GM10248 (cell line): ENCODE measurements at regions of chr10 and their contacts with region 1.

Region 1: GRCh38 chr10:131453594-131454355 is 142.3 kb upstream of the TCERG1L start:
- DNase-seq: peak; percentile 56
- CTCF ChIP-seq: peak; percentile 57

Region 2: DNA sequence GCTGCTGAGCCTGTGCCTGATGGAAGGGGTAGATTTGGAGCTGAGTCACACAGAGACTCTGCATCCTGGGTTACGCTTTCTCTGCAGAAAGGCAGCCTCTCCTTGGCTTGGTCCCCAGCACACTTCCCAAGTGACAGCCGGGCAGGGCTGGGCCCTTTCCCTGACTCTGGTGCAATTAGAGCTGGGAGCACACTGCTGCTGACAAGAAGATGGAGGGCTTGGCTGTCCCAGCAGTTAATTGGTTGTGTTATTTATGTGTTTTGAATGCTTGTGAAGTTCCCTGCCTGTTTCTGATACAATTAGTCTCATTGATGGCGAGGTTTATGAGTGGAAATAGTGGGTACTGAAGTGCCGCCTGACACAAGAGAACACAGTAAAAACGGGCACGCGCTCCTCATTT is 265.8 kb before region 1 on chr10:
- CTCF ChIA-PET with region 1: no interaction called
- POLR2A ChIA-PET with region 1: no interaction called
- DNase-seq: no peak
- CTCF ChIP-seq: no peak

Region 3: DNA sequence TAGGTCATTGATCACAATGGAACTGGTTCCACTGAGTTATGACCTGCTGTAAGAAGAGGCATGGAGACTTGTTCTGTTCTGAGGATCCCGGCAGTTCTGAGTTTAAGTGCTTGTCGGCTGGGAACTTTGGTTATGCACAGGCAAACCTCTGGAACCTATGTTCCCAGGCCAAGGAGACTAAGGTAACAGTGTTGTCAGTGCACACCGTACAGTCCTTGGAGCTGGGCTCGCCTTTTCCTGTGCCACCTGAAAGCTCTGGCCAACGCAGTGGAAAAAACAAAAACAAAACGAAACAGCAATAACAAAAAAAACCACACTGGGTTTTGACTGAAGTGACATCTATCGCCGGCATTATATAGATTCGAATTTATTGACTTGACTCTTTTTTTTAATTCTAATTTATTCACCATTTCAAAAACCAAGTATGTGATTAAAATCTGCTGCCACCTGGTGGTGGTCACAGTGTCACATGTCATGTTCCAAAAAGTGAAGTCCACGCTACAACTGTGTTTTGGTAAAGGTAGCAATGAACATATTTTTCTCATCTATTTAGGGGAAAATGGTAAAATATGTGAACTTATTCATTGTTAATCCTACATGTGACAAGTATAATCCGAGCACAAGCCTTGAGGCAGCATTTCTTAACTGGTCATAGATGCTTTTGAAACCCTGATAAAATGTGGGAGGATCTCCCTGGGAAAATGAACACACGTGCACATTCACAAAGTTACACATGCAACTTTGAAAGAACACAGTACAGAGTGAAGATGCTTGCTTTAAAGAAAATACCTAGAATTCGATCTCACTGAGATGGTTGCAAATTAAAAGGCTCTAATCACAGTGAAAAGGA is 333.2 kb after region 1 on chr10:
- CTCF ChIA-PET with region 1: interaction called, 16 read pairs
- POLR2A ChIA-PET with region 1: no interaction called
- DNase-seq: no peak
- CTCF ChIP-seq: peak; percentile 62

Region 4: DNA sequence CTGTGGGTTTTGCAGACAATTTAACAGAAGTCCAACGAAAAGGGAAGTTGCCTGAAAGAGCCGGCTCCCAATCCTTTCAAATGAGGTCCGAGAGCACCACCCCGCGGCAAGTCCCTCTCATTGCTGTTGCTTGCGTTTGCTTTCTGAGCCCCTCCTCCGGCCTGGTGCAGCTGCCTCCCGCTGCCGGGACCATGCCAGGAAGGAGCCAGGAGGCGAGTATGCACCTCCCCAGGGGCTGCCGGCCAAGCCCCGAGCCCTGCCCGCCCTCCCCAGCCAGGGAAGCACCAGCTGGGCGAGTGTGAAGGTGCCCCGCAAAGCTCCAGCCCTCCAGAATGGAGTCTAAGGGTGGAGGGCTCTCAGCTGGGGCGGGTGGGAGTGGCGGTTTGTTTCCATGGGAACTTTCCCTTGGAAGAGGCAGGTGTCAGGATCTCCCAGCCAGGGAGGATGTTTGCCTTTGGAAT is 421.2 kb after region 1 on chr10:
- CTCF ChIA-PET with region 1: interaction called, 17 read pairs
- POLR2A ChIA-PET with region 1: no interaction called
- DNase-seq: peak; percentile 87
- CTCF ChIP-seq: peak; percentile 80